GM13976 (cell line): ENCODE measurements at regions of chr15 and their contacts with region 1.

Region 1: GRCh38 chr15:67394873-67395639 is 125.9 kb upstream of the C15orf61 start:
- DNase-seq: no peak
- CTCF ChIP-seq: no peak

Region 2: DNA sequence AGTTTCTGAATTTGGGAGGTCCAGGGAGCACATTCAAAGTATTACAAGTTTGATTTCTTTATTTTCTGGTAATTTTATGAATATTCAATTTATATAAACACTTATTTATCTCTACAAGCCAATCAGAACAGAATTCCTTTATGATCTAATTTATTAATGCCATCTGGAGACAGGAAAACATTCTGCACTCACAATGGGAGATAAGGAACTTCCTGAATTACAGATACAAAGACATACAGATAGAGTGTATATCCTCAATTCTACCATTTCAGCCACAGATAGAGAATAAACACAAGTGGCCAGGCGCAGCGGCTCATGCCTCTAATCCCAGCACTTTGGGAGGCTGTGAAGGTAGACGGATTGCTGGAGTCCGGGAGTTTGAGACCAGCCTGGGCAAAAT is 54.4 kb before region 1 on chr15:
- in situ Hi-C with region 1: loop called (anchors 5 kb)
- DNase-seq: no peak
- CTCF ChIP-seq: no peak